ENCODE measurements at regions of chr19 and their contacts with region 1.

Region 1: GRCh38 chr19:51660975-51661600 is 14.5 kb upstream of the SIGLEC14 start:
- DNase-seq: peak; percentile 44 to 81
- ATAC-seq: peak; percentile 77 to 87; a peak in 4 of 6 replicates
- H3K4me3 ChIP-seq: no peak overlapping the region
- H3K27ac ChIP-seq: no peak overlapping the region
- H3K4me1 ChIP-seq: no peaks in the 10 kb centered on the region
- CTCF ChIP-seq: peak; percentile 55
- EP300 ChIP-seq: no peak
- POLR2A ChIP-seq: no peak
- RAD21 ChIP-seq: peak; percentile 57 to 75

Region 2: GRCh38 chr19:51338563-51339312 is 322.4 kb before region 1 on chr19:
- CTCF ChIA-PET with region 1: interaction called, 19 read pairs
- POLR2A ChIA-PET with region 1: interaction called, 17 read pairs
- DNase-seq: peak; percentile 88 to 91
- ATAC-seq: peak; percentile 79 to 88
- H3K4me3 ChIP-seq: peak overlapping the region; percentile 64
- H3K27ac ChIP-seq: peak overlapping the region; percentile 84 to 90
- H3K4me1 ChIP-seq: peaks cover 32% of the 10 kb centered on the region
- CTCF ChIP-seq: peak; percentile 97
- EP300 ChIP-seq: no peak
- POLR2A ChIP-seq: peak; percentile 25; the same call in 1 of the 2 replicates
- RAD21 ChIP-seq: peak; percentile 80 to 95

Region 3: GRCh38 chr19:51422053-51422448 is 239.0 kb before region 1 on chr19:
- CTCF ChIA-PET with region 1: interaction called, 33 read pairs
- POLR2A ChIA-PET with region 1: no interaction called
- DNase-seq: peak; percentile 80
- ATAC-seq: peak; percentile 87 to 96
- H3K4me3 ChIP-seq: no peak overlapping the region
- H3K27ac ChIP-seq: no peak overlapping the region
- H3K4me1 ChIP-seq: no peaks in the 10 kb centered on the region
- CTCF ChIP-seq: peak; percentile 83
- EP300 ChIP-seq: no peak
- POLR2A ChIP-seq: no peak
- RAD21 ChIP-seq: peak; percentile 78 to 81

Region 4: DNA sequence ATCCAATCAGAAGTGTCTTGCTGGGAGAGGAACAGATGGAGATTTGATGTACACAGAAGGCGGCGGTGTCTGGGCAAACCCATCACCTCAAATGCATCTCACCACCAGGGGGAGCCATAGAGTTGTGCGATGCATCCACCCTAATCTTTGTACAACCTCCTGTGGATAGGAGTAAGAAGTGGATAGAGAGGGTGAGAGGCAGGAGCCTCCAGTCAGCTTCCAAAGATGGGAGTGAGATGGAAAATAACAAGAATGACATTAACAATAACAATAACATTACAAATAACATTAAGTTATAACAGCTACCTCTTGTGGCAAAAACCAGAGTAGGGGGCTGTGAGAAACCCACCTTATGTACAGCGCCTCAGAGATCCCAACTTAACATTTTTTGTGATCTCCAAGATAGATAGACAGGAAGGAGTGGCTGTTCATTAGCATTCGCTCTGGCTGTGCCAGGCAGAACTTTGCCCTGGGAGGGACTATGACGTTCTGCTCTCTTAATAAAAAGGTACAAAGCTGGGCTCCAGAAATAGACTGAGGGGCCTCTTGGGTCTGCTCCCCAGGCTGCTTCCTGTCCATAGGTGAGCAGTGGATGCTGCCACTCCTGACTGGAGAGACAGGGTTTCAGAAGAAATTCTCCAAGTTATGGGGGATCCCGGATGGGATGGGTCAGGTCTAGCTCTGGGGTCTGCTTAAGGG is 187.9 kb before region 1 on chr19:
- CTCF ChIA-PET with region 1: interaction called, 72 read pairs
- POLR2A ChIA-PET with region 1: interaction called, 3 read pairs
- DNase-seq: peak; percentile 48 to 72
- ATAC-seq: peak; percentile 77 to 90; a peak in 5 of 6 replicates
- H3K4me3 ChIP-seq: no peak overlapping the region
- H3K27ac ChIP-seq: no peak overlapping the region
- H3K4me1 ChIP-seq: peaks cover 13% of the 10 kb centered on the region; the same call in 2 of the 3 replicates
- CTCF ChIP-seq: peak; percentile 77
- EP300 ChIP-seq: no peak
- POLR2A ChIP-seq: no peak
- RAD21 ChIP-seq: peak; percentile 56 to 79; a peak in 4 of 5 replicates

Region 5: GRCh38 chr19:51644636-51645271 is 16.3 kb before region 1 on chr19:
- CTCF ChIA-PET with region 1: interaction called, 26 read pairs
- POLR2A ChIA-PET with region 1: no interaction called
- DNase-seq: no peak
- ATAC-seq: no peak; a peak in 1 of 6 replicates
- H3K4me3 ChIP-seq: no peak overlapping the region
- H3K27ac ChIP-seq: no peak overlapping the region
- H3K4me1 ChIP-seq: no peaks in the 10 kb centered on the region
- CTCF ChIP-seq: no peak
- EP300 ChIP-seq: no peak
- POLR2A ChIP-seq: no peak
- RAD21 ChIP-seq: no peak

Region 6: DNA sequence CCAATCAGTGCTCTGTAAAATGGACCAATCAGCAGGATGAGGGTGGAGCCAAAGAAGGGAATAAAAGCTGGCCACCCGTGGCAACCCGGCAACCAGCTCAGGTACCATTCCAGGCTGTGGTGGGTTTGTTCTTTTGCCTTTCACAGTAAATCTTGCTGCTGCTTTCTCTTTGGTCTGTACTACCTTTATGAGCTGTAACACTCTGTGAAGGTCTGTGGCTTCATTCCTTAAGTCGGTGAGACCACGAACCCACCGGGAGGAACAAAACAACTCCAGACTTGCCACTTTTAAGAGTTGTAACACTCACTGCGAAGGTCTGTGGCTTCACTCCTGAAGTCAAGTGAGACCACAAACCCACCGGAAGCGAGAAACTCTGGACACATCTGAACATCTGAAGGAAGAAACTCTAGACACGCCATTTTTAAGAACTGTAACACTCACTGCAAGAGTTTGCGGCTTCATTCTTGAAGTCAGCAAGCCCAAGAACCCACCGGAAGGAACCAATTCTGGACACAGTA is 15.5 kb after region 1 on chr19:
- CTCF ChIA-PET with region 1: interaction called, 13 read pairs
- POLR2A ChIA-PET with region 1: no interaction called
- DNase-seq: no peak
- ATAC-seq: no peak
- H3K4me3 ChIP-seq: no peak overlapping the region
- H3K27ac ChIP-seq: no peak overlapping the region
- H3K4me1 ChIP-seq: no peaks in the 10 kb centered on the region
- CTCF ChIP-seq: no peak
- EP300 ChIP-seq: no peak
- POLR2A ChIP-seq: no peak
- RAD21 ChIP-seq: no peak